CD8-positive, alpha-beta T cell (primary cell): ENCODE measurements at regions of chr12 and their contacts with region 1.

Region 1: GRCh38 chr12:89856431-89856830 is 147.8 kb upstream of the ATP2B1 start:
- DNase-seq: peak in 2 of 9 experiments; percentile 19 to 49
- ATAC-seq: peak; percentile 42
- H3K4me3 ChIP-seq: no peak overlapping the region
- H3K4me3 Mint-ChIP-seq: no peak overlapping the region
- H3K27ac ChIP-seq: no peak overlapping the region
- H3K27ac Mint-ChIP-seq: peak overlapping the region; percentile 29
- H3K4me1 ChIP-seq: peaks cover 11% of the 10 kb centered on the region
- H3K4me1 Mint-ChIP-seq: peaks cover 38% of the 10 kb centered on the region
- H3K27me3 ChIP-seq: no peaks in the 10 kb centered on the region
- H3K27me3 Mint-ChIP-seq: no peaks in the 10 kb centered on the region
- CTCF ChIP-seq: no peak

Region 2: GRCh38 chr12:89648211-89648930 is 208.1 kb before region 1 on chr12:
- CTCF ChIA-PET with region 1: no interaction called
- POLR2A ChIA-PET with region 1: no interaction called
- intact Hi-C with region 1: no loop called
- DNase-seq: no peak
- ATAC-seq: no peak
- H3K4me3 ChIP-seq: no peak overlapping the region
- H3K4me3 Mint-ChIP-seq: no peak overlapping the region
- H3K27ac ChIP-seq: no peak overlapping the region
- H3K27ac Mint-ChIP-seq: no peak overlapping the region
- H3K4me1 ChIP-seq: peaks cover 4% of the 10 kb centered on the region
- H3K4me1 Mint-ChIP-seq: peaks cover 61% of the 10 kb centered on the region
- H3K27me3 ChIP-seq: no peaks in the 10 kb centered on the region
- H3K27me3 Mint-ChIP-seq: no peaks in the 10 kb centered on the region
- CTCF ChIP-seq: no peak

Region 3: GRCh38 chr12:89918181-89918868 is 61.9 kb after region 1 on chr12:
- CTCF ChIA-PET with region 1: no interaction called
- POLR2A ChIA-PET with region 1: no interaction called
- intact Hi-C with region 1: loop called in 1 of 2 experiments (anchors 5 kb)
- DNase-seq: peak in 2 of 9 experiments; percentile 15 to 34
- ATAC-seq: no peak
- H3K4me3 ChIP-seq: no peak overlapping the region
- H3K4me3 Mint-ChIP-seq: no peak overlapping the region
- H3K27ac ChIP-seq: no peak overlapping the region
- H3K27ac Mint-ChIP-seq: no peak overlapping the region
- H3K4me1 ChIP-seq: no peaks in the 10 kb centered on the region
- H3K4me1 Mint-ChIP-seq: peaks cover 4% of the 10 kb centered on the region
- H3K27me3 ChIP-seq: no peaks in the 10 kb centered on the region
- H3K27me3 Mint-ChIP-seq: no peaks in the 10 kb centered on the region
- CTCF ChIP-seq: no peak